Heart right ventricle (tissue), 16 donors: ENCODE measurements at regions of chr6 and their contacts with region 1.

Region 1: GRCh38 chr6:111259089-111259831 is 172.0 kb downstream of the SLC16A10 start:
- DNase-seq: peak; percentile 99
- ATAC-seq: peak; percentile 98 to 99 (median 99)
- H3K4me3 ChIP-seq: peak overlapping the region; percentile 57 to 96 (median 70)
- H3K27ac ChIP-seq: peak overlapping the region in 9 of 10 donors; percentile 71 to 92 (median 88)
- H3K4me1 ChIP-seq: peaks cover 0 to 27% (median 17%) of the 10 kb centered on the region in 9 donors
- H3K27me3 ChIP-seq: peaks cover 0 to 14% (median 2%) of the 10 kb centered on the region in 7 donors
- CTCF ChIP-seq: peak; percentile 90 to 98 (median 95)

Region 2: GRCh38 chr6:111642463-111643158 is 383.4 kb after region 1 on chr6:
- intact Hi-C with region 1: loop called in 4 of 10 experiments (anchors 2 to 10 kb)
- DNase-seq: peak; percentile 52 to 78
- ATAC-seq: peak; percentile 83 to 95 (median 92)
- H3K4me3 ChIP-seq: no peak overlapping the region
- H3K27ac ChIP-seq: no peak overlapping the region
- H3K4me1 ChIP-seq: peaks cover 0 to 14% (median 0%) of the 10 kb centered on the region in 9 donors
- H3K27me3 ChIP-seq: no peaks in the 10 kb centered on the region
- CTCF ChIP-seq: peak; percentile 43 to 81 (median 64)

Region 3: DNA sequence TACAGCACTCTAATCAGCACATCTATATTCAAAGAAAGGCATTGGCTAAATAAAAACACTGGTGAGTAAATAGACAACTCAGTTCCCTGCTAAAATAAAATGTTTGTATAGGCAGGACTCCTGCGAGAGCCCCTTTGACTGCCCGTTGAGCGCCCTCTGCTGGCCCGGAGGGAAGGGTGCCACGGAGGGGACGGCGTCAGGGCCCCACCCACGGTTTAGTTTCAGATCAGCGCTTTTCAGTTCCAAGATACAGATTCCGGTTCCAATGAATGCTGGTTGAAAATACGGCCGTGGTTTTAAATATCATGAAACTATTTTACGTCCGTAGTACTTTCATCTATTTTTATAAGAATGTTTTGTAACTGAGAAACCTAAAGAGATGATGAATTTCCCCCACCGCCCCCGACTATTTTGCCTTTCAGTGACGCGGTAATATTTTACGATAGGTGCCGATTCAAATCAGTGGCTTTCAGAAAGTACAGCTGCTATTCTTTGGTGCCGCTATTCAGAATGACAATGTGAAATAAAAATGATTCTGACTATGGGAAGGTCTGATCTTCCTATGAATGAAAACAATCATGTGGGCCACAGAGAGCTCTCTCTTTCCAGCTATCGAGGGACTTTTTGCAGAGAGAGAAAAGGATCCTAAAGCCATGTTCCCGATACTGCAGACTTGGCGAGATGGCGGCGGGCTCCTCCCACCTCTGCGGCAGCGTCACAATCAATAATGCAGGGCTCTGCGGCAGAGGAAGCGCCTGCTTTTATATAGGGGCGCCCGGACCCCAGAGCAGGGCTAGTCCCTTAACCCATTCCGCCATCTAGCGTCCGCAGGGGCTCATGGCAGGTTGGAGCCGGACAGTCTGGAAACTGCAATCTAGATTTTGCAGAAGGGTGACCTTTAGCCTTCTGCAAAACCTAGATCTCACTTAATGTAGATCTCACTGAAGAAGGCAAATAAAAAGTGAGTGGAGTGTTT is 784.1 kb after region 1 on chr6:
- intact Hi-C with region 1: loop called in 6 of 10 experiments (anchors 1 to 10 kb)
- DNase-seq: peak; percentile 87
- ATAC-seq: peak; percentile 88 to 99 (median 94)
- H3K4me3 ChIP-seq: peak overlapping the region; percentile 33 to 75 (median 58)
- H3K27ac ChIP-seq: peak overlapping the region; percentile 57 to 88 (median 78)
- H3K4me1 ChIP-seq: peaks cover 0 to 37% (median 12%) of the 10 kb centered on the region in 9 donors
- H3K27me3 ChIP-seq: no peaks in the 10 kb centered on the region
- CTCF ChIP-seq: peak; percentile 88 to 99 (median 95)